CD14-positive monocyte (primary cell): ENCODE measurements at regions of chr19 and their contacts with region 1.

Region 1: GRCh38 chr19:3665681-3666544 is 34.4 kb downstream of the PIP5K1C start:
- DNase-seq: peak; percentile 29 to 58 (median 39)
- H3K4me3 ChIP-seq: no peak overlapping the region
- H3K4me3 Mint-ChIP-seq: no peak overlapping the region
- H3K27ac ChIP-seq: peak overlapping the region in 1 of 2 donors; percentile 31
- H3K27ac Mint-ChIP-seq: peak overlapping the region in 1 of 7 donors; percentile 35
- H3K4me1 ChIP-seq: peaks cover 4 to 7% of the 10 kb centered on the region in 2 donors
- H3K4me1 Mint-ChIP-seq: peaks cover 6% of the 10 kb centered on the region
- H3K27me3 ChIP-seq: peaks cover 0 to 2% of the 10 kb centered on the region in 2 donors
- H3K27me3 Mint-ChIP-seq: peaks cover 3 to 8% (median 4%) of the 10 kb centered on the region in 3 donors
- CTCF ChIP-seq: peak; percentile 96

Region 2: DNA sequence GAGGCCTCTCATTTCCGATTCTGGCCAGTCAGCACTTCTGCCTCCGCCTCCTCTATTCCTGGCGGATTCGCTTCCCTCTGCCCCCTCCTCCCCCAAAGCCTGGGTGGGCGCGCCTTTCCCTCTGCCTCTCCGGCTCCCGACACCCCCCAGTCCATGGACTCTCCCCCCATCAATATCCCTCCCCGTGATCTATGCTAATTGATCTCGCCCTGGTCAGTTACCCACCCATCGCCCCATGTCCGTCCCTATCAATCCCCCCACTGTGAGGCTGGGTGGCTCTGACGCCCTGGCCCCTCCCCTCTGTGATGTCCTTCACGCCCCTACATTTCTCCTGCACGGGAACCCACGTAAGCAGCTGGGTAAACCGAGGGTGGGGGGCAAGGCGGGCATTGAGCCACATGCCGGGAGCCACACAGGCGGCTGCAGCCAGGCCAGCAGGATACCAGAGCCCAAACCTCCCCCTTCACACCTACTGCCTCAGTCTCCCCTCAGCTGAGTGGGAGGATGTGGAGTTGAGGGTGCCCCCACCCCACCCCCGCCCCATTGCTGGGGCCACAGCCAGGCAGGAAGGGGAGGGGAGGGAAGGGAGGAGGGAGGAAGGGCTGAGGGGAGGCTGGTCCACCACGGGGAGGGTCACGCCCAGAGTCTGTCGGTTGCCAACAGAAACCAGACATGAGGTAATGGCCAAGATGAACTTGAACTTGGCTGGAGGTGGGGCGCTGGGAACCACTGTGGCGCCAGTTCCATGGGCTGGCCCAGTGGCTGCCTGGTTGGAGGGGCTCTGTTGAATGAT is 206.6 kb before region 1 on chr19:
- intact Hi-C with region 1: no loop called
- DNase-seq: no peak
- H3K4me3 ChIP-seq: no peak overlapping the region
- H3K4me3 Mint-ChIP-seq: no peak overlapping the region
- H3K27ac ChIP-seq: no peak overlapping the region
- H3K27ac Mint-ChIP-seq: peak overlapping the region in 3 of 7 donors; percentile 7 to 57 (median 24)
- H3K4me1 ChIP-seq: no peaks in the 10 kb centered on the region
- H3K4me1 Mint-ChIP-seq: no peaks in the 10 kb centered on the region
- H3K27me3 ChIP-seq: no peaks in the 10 kb centered on the region
- H3K27me3 Mint-ChIP-seq: no peaks in the 10 kb centered on the region
- CTCF ChIP-seq: no peak

Region 3: GRCh38 chr19:3708208-3708931 is 42.5 kb after region 1 on chr19 and contains the start of gene TJP3:
- intact Hi-C with region 1: loop called (anchors 5 kb)
- DNase-seq: no peak
- H3K4me3 ChIP-seq: no peak within 1 kb of the TSS
- H3K4me3 Mint-ChIP-seq: peak within 1 kb of the TSS in 1 of 2 donors; percentile 53
- H3K27ac ChIP-seq: no peak within 1 kb of the TSS
- H3K27ac Mint-ChIP-seq: peak within 1 kb of the TSS in 4 of 7 donors; percentile 15 to 60 (median 51)
- H3K4me1 ChIP-seq: peaks cover 9 to 22% of the 10 kb centered on the region in 2 donors
- H3K4me1 Mint-ChIP-seq: peaks cover 22% of the 10 kb centered on the region
- H3K27me3 ChIP-seq: peaks cover 0 to 13% of the 10 kb centered on the region in 2 donors
- H3K27me3 Mint-ChIP-seq: peaks cover 7 to 48% (median 20%) of the 10 kb centered on the region in 3 donors
- CTCF ChIP-seq: no peak
- polyA plus RNA-seq, gene TJP3: 0.01 TPM in 1 of 3 donors, not detected in the others

Region 4: GRCh38 chr19:3821857-3822364 is 156.0 kb after region 1 on chr19:
- intact Hi-C with region 1: loop called (anchors 2 to 5 kb)
- DNase-seq: peak; percentile 57 to 74 (median 61)
- H3K4me3 ChIP-seq: no peak overlapping the region
- H3K4me3 Mint-ChIP-seq: peak overlapping the region in 1 of 2 donors; percentile 60
- H3K27ac ChIP-seq: no peak overlapping the region
- H3K27ac Mint-ChIP-seq: peak overlapping the region in 1 of 7 donors; percentile 45
- H3K4me1 ChIP-seq: peaks cover 8 to 18% of the 10 kb centered on the region in 2 donors
- H3K4me1 Mint-ChIP-seq: peaks cover 14% of the 10 kb centered on the region
- H3K27me3 ChIP-seq: no peaks in the 10 kb centered on the region
- H3K27me3 Mint-ChIP-seq: peaks cover 9 to 22% (median 14%) of the 10 kb centered on the region in 3 donors
- CTCF ChIP-seq: peak; percentile 100